Endothelial cell of umbilical vein (primary cell): ENCODE measurements at regions of chr5 and their contacts with region 1.

Region 1: GRCh38 chr5:128538250-128539037 is 399 bp upstream of the FBN2 start:
- DNase-seq: peak; percentile 85
- H3K4me3 ChIP-seq: peak overlapping the region; percentile 65 to 96 (median 78)
- H3K27ac ChIP-seq: peak overlapping the region; percentile 22
- H3K4me1 ChIP-seq: peaks cover 2% of the 10 kb centered on the region
- H3K27me3 ChIP-seq: no peaks in the 10 kb centered on the region
- CTCF ChIP-seq: no peak
- POLR2A ChIP-seq: no peak

Region 2: GRCh38 chr5:128413356-128413755 is 125.1 kb before region 1 on chr5:
- CTCF ChIA-PET with region 1: no interaction called
- POLR2A ChIA-PET with region 1: no interaction called
- dilution Hi-C with region 1: no loop called
- intact Hi-C with region 1: loop called (anchors 5 kb)
- DNase-seq: peak; percentile 23
- H3K4me3 ChIP-seq: no peak overlapping the region
- H3K27ac ChIP-seq: no peak overlapping the region
- H3K4me1 ChIP-seq: peaks cover 26% of the 10 kb centered on the region
- H3K27me3 ChIP-seq: peaks cover 0 to 1% of the 10 kb centered on the region in 2 experiments
- CTCF ChIP-seq: no peak
- POLR2A ChIP-seq: no peak

Region 3: GRCh38 chr5:128674825-128675446 is 136.5 kb after region 1 on chr5:
- CTCF ChIA-PET with region 1: interaction called, 24 read pairs
- POLR2A ChIA-PET with region 1: no interaction called
- dilution Hi-C with region 1: no loop called
- intact Hi-C with region 1: loop called (anchors 1 kb)
- DNase-seq: peak; percentile 63
- H3K4me3 ChIP-seq: no peak overlapping the region
- H3K27ac ChIP-seq: no peak overlapping the region
- H3K4me1 ChIP-seq: no peaks in the 10 kb centered on the region
- H3K27me3 ChIP-seq: no peaks in the 10 kb centered on the region
- CTCF ChIP-seq: peak; percentile 64 to 67
- POLR2A ChIP-seq: no peak

Region 4: DNA sequence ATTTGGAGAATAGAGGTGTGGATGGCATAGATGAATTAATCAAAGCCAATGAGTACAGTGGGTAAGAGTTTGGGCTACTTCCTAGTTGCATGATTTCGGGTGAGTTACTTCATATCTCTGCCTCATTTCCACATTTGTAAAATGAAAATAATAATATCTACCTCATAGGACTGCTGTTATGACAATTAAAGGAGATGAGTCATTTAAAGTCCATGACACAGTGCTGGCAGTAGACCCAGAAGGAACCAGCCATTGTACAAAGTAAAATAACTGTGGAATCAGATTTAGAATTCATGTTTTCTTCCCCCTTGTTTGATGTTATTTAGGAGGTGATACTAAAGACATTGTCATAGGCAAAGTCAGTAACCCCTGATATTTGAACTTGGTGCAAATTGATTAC is 287.4 kb after region 1 on chr5:
- CTCF ChIA-PET with region 1: no interaction called
- POLR2A ChIA-PET with region 1: no interaction called
- dilution Hi-C with region 1: no loop called
- intact Hi-C with region 1: loop called (anchors 5 kb)
- DNase-seq: peak; percentile 83
- H3K4me3 ChIP-seq: no peak overlapping the region
- H3K27ac ChIP-seq: peak overlapping the region; percentile 35
- H3K4me1 ChIP-seq: peaks cover 26% of the 10 kb centered on the region
- H3K27me3 ChIP-seq: no peaks in the 10 kb centered on the region
- CTCF ChIP-seq: no peak
- POLR2A ChIP-seq: no peak

Region 5: GRCh38 chr5:129094087-129094923 is 555.9 kb after region 1 on chr5 and contains the start of gene ISOC1:
- CTCF ChIA-PET with region 1: no interaction called
- POLR2A ChIA-PET with region 1: no interaction called
- dilution Hi-C with region 1: no loop called
- intact Hi-C with region 1: loop called (anchors 2 kb)
- DNase-seq: peak; percentile 93
- H3K4me3 ChIP-seq: peak within 1 kb of the TSS; percentile 71 to 93 (median 75)
- H3K27ac ChIP-seq: peak within 1 kb of the TSS; percentile 13
- H3K4me1 ChIP-seq: peaks cover 27% of the 10 kb centered on the region
- H3K27me3 ChIP-seq: peaks cover 0 to 2% of the 10 kb centered on the region in 2 experiments
- CTCF ChIP-seq: no peak
- POLR2A ChIP-seq: peak; percentile 83
- total RNA-seq, gene ISOC1: 20.7 and 21.4 TPM in 2 replicates